Right ventricle myocardium inferior (tissue), 1 donor: ENCODE measurements at regions of chrX and their contacts with region 1.

Region 1: DNA sequence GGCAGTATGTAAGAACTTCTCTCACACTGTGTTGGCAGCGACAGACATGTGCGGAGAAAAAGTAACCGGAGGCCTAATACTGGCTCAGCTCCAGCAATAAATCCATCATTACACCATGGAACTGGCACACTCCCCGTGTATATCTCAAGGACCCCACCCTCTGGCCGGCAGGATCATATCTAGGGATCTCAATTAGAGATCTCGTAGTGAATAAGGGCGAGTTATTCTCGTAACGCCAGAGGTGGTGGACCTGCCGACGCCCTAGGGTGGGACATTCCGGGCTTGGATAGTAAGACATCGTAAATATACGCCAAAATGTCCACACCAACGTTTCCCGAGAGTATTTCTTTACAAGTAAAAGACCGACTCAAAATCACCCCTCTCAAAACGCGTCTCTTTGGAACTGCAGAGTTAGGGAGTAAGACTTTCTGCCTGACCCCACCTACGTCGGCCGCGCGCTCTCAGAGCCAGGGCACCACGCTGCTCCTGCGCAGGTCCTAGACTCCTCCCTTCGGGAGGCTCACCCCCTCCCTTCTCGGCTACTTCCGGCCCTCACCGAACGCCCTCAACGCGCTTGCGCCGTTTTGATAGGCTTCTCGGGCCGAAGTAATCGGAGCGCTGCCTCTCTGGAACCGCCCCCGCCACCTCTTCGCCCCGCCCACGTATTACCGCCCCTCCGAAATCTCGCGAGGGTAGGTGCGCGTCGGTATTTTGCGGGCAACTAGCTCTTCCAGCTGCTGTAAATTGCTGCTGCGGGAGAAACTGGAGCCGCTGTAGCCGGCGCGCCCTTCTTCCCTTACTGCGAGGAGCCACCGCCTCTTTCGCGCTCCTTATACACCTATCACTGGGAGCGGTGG is at the start of gene WDR44:
- DNase-seq: peak; percentile 96
- ATAC-seq: peak; percentile 99
- total RNA-seq, gene WDR44: 12.4 TPM

Region 2: GRCh38 chrX:118420462-118420861 is 74.8 kb after region 1 on chrX:
- intact Hi-C with region 1: loop called (anchors 10 kb)
- DNase-seq: no peak
- ATAC-seq: peak; percentile 44

Region 3: DNA sequence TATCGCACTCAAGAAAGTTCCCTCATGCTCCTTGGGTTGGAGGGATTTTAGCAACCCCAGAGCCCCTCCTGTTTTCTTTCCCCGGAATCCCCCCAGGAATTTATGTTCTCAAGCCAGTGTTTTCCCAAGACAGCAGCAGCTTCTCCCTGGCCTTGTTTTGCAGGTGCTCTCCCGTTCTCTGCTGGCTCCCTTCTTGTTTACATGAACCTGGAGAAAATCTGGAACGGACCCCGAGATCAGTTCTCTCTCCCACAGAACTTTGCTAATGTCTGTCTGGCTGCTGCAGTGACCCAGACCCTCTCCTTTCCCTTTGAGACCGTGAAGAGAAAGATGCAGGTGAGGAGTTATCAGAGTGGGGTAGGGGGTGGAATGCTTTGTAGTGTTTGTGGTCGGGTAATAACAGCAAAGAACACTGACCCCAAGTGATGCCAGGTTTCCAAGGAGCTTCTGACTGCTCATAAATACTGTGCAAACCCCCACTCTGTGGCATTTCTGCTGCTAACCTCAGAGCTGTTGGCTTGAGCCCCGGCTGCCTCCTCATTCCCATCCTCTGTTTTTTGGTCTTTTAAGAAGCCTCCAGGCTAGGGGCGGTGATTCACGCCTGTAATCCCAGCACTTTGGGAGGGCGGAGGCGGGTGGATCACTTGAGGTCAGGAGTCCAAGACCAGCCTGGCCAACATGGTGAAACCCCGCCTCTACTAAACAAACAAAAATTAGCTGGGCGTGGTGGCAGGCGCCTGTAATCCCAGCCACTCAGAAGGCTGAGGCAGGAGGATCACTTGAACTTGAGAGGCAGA is 1064.6 kb after region 1 on chrX:
- intact Hi-C with region 1: no loop called
- DNase-seq: no peak
- ATAC-seq: no peak